Calu3 (cell line): ENCODE measurements at regions of chr1 and their contacts with region 1.

Region 1: DNA sequence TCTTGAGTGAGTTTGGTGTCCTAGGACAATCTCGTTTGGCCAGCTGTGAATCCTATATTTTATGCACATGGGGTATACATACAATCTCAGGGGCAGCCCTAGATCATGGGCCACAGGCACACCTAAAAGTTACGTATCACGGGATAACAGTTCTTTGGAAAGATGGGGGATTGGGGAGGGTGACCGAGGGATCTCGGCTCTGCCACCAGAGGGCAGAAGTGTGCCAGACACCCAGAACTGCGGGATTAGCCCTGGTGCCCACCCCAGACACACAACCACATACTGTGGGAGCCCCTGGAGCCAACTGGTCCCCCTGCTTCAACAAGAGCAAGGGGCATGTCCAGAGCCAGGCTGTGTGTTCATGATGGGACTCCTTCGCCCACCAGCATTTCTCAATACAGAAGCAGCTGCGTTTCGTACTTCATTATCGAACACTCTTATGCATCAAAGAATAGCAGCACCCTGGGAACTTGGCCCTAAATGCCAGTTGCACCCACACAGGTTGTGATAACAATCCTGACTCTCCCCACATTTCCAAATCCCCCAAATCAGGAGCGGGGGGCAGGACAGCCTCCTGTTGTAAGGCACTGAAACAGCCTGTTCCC is 37.4 kb downstream of the TMCO4 start:
- DNase-seq: peak; percentile 55
- H3K4me3 Mint-ChIP-seq: no peak overlapping the region
- H3K27ac Mint-ChIP-seq: no peak overlapping the region
- H3K4me1 Mint-ChIP-seq: peaks cover 43% of the 10 kb centered on the region
- H3K27me3 Mint-ChIP-seq: no peaks in the 10 kb centered on the region
- CTCF ChIP-seq: peak; percentile 78

Region 2: DNA sequence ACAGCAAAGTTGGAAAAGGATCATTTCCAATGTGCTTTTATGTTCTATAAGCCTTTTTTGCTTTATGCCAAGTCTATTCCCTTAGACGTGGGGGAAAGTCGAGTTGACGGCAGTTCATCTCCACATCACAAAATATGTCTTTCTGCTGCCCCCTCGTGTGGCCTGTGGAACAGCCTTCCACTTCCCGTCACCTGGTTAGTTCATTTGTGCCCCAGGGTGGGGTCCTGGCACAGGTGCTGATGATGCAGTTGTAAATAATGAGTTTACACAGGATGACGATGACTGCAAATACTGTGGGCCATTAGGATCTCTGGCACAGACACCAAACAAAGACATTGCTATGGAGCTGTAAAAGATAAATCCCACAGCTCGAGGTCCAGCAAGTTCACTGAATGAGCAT is 109.9 kb after region 1 on chr1:
- CTCF ChIA-PET with region 1: interaction called, 12 read pairs
- intact Hi-C with region 1: loop called (anchors 1 kb)
- DNase-seq: peak; percentile 81
- H3K4me3 Mint-ChIP-seq: no peak overlapping the region
- H3K27ac Mint-ChIP-seq: peak overlapping the region; percentile 60
- H3K4me1 Mint-ChIP-seq: peaks cover 14% of the 10 kb centered on the region
- H3K27me3 Mint-ChIP-seq: no peaks in the 10 kb centered on the region
- CTCF ChIP-seq: no peak

Region 3: DNA sequence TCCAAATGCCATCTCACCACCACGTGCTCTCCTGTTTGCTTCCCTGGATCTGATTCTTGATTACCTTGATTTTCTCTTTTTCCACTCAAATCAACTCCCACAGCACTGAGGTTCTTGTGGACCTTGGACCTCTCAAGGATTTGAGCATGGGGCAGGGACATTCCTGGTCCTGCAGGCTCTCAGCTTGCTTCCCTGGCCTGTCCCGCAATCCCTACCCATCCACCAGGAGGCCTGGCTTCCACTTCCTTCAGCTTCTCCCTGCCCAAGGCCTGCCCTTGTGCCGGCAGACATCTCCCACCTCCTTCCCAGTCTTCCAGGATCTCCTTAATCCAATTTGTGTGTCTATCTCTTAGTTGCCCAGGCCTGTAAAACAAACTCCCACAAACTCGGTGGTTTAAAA is 195.5 kb after region 1 on chr1:
- CTCF ChIA-PET with region 1: no interaction called
- intact Hi-C with region 1: no loop called
- DNase-seq: no peak
- H3K4me3 Mint-ChIP-seq: no peak overlapping the region
- H3K27ac Mint-ChIP-seq: no peak overlapping the region
- H3K4me1 Mint-ChIP-seq: no peaks in the 10 kb centered on the region
- H3K27me3 Mint-ChIP-seq: peaks cover 46% of the 10 kb centered on the region
- CTCF ChIP-seq: no peak

Region 4: GRCh38 chr1:20854529-20854928 is 1092.3 kb after region 1 on chr1:
- CTCF ChIA-PET with region 1: no interaction called
- intact Hi-C with region 1: no loop called
- DNase-seq: no peak
- H3K4me3 Mint-ChIP-seq: no peak overlapping the region
- H3K27ac Mint-ChIP-seq: no peak overlapping the region
- H3K4me1 Mint-ChIP-seq: no peaks in the 10 kb centered on the region
- H3K27me3 Mint-ChIP-seq: no peaks in the 10 kb centered on the region
- CTCF ChIP-seq: no peak